H1 (cell line): ENCODE measurements at regions of chr13 and their contacts with region 1.

Region 1: DNA sequence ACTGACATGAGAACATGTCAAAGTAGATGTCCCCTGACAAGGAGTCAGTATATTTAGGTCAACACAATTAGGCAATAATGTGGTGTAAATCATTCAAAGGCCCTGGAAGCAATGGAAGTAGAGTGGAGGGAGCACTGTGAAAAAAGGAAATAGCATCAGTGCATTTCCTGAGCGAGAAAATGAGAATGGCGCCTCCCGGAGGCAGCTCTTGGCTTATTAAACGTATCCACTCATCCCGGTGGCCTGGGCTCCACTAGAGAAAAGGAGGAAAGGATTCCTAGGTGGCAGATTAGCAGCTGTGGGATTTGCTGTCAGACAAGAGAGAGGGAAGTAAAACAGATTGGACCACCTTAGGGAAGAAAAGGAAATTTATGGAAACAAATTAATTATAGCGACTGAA is 173.7 kb upstream of the TMTC4 start:
- DNase-seq: peak in 1 of 2 experiments; percentile 58
- H3K4me3 ChIP-seq: no peak overlapping the region
- H3K27ac ChIP-seq: no peak overlapping the region
- H3K4me1 ChIP-seq: no peaks in the 10 kb centered on the region; a peak in 1 of 7 replicates
- H3K27me3 ChIP-seq: no peaks in the 10 kb centered on the region
- CTCF ChIP-seq: peak; percentile 34 to 61 (median 60)
- EP300 ChIP-seq: no peak
- POLR2A ChIP-seq: no peak
- RAD21 ChIP-seq: peak; percentile 59 to 68

Region 2: GRCh38 chr13:100597253-100597652 is 251.1 kb before region 1 on chr13:
- CTCF ChIA-PET with region 1: no interaction called
- POLR2A ChIA-PET with region 1: no interaction called
- DNase-seq: no peak
- H3K4me3 ChIP-seq: no peak overlapping the region
- H3K27ac ChIP-seq: no peak overlapping the region
- H3K4me1 ChIP-seq: 0 out of 7 replicates have a peak, but pooled peaks cover 0 to 2% (median 0%) of the 10 kb centered on the region in 4 experiments
- H3K27me3 ChIP-seq: no peaks in the 10 kb centered on the region
- CTCF ChIP-seq: no peak
- EP300 ChIP-seq: no peak
- POLR2A ChIP-seq: no peak
- RAD21 ChIP-seq: no peak

Region 3: DNA sequence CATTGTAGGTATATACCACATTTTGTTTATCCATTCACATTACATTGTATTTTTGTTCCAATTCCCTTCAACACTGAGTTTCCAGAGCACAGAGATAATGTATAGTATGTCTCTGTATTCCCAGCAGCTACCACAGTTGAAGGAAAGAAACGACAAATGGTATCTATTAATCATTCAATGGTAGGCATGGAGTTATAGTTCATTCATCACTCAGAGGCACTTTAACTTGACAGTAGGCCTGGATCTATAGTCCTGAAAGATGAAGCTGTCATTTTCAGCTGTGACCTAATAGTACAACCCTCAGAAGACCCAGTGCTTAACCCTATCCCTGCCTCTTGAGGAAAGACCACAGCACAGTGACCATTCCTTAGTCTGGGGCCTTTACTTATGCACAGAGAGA is 10.7 kb before region 1 on chr13:
- CTCF ChIA-PET with region 1: interaction called, 11 read pairs
- POLR2A ChIA-PET with region 1: no interaction called
- DNase-seq: no peak
- H3K4me3 ChIP-seq: no peak overlapping the region
- H3K27ac ChIP-seq: no peak overlapping the region
- H3K4me1 ChIP-seq: no peaks in the 10 kb centered on the region; a peak in 1 of 7 replicates
- H3K27me3 ChIP-seq: no peaks in the 10 kb centered on the region
- CTCF ChIP-seq: no peak
- EP300 ChIP-seq: no peak
- POLR2A ChIP-seq: no peak
- RAD21 ChIP-seq: no peak

Region 4: DNA sequence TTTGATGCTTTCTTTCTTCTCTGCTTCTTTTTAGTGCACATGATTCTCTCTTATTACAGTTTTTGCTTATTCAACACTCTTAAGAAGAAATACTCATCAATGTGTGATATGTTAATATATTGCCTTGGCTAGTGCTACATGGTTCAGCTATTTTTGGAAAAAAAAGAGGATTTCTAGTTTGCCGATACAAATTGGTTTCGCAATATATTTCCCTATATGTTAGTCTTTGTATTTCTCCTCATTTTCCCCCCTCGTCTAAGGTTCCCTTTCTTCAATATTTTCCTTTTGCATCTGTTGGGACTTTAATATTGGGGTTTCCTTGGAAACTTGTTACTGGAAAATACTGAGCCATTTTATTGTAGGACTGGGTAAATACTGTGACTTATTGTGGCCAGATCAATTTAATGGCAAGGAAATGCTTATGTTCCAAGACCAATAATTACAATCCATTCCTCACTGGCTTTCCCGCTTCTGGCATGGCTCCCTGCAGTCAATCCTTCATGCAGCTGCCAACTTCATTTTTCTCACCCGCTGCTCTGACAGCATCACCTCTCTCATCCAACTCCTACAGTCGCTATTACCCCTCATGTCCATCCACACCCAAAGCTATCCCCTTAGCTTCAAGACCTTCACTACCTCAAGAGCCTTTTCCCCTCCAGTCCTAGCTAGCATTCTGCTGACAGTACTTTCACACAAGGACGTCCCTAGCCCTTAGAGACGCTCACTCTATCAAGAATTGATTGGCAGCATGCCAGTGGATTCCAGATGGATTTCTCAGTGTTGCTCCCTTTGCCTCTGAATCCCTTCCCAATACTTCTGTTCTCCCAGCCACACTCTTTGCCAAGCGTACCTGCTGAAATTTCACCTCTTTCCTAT is 106.4 kb after region 1 on chr13:
- CTCF ChIA-PET with region 1: no interaction called
- POLR2A ChIA-PET with region 1: no interaction called
- DNase-seq: no peak
- H3K4me3 ChIP-seq: no peak overlapping the region
- H3K27ac ChIP-seq: no peak overlapping the region
- H3K4me1 ChIP-seq: no peaks in the 10 kb centered on the region
- H3K27me3 ChIP-seq: no peaks in the 10 kb centered on the region
- CTCF ChIP-seq: no peak
- EP300 ChIP-seq: no peak
- POLR2A ChIP-seq: no peak
- RAD21 ChIP-seq: no peak